ENCODE measurements at regions of chr7 and their contacts with region 1.

Region 1: DNA sequence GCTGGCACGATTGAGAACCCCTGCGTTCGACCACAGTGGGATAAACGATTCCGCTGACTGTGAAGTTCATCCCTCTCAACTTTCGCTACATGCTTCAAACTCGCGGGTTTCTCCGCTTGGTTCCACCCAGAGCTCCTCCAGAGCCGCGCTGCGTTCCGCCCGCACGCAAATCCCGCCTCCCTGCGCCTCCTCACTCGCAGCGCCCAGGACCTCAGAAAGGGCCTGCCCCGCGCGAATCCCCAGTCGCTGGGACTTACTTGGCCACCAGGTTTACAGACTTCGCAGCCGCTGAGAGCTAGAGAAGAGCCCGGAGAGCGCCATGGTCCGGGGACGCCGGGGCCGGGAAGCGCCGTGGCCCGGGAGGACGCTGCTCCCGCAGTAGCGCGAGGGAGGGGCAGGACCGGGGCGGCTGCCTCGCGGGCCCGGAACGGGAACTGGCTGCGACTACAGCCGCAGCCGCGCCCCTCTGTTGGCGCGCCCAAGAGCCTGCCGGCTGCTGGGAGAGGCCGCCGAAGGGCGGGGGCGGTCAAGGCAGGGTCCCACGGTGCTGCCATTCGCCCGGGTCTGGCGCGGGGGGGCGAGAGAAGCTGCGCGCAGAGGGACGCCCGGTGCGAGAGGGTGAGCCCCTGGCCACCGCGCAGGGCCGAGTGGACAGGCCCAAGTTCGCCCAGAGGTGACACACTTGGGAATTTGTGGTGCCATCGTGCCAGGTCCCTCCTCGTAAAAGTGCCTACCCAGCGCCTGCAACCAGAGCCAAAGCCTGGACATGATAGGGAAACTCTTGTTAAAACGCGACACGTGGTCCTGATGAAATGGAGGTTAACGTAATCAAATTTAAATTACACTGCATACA is at the start of gene NOD1:
- DNase-seq: peak; percentile 87 to 91 (median 89)
- ATAC-seq: peak; percentile 74 to 95 (median 94)
- H3K4me3 ChIP-seq: peak within 1 kb of the TSS; percentile 47 to 90 (median 68)
- H3K27ac ChIP-seq: peak within 1 kb of the TSS; percentile 91 to 99 (median 95)
- H3K4me1 ChIP-seq: peaks cover 3 to 54% (median 48%) of the 10 kb centered on the region in 12 donors
- H3K27me3 ChIP-seq: no peaks in the 10 kb centered on the region
- CTCF ChIP-seq: peak in 4 of 12 donors; percentile 24 to 47 (median 32)
- POLR2A ChIP-seq: peak in 1 of 2 donors; percentile 73
- total RNA-seq, gene NOD1: 5.3 to 28.8 (median 9.0) TPM

Region 2: DNA sequence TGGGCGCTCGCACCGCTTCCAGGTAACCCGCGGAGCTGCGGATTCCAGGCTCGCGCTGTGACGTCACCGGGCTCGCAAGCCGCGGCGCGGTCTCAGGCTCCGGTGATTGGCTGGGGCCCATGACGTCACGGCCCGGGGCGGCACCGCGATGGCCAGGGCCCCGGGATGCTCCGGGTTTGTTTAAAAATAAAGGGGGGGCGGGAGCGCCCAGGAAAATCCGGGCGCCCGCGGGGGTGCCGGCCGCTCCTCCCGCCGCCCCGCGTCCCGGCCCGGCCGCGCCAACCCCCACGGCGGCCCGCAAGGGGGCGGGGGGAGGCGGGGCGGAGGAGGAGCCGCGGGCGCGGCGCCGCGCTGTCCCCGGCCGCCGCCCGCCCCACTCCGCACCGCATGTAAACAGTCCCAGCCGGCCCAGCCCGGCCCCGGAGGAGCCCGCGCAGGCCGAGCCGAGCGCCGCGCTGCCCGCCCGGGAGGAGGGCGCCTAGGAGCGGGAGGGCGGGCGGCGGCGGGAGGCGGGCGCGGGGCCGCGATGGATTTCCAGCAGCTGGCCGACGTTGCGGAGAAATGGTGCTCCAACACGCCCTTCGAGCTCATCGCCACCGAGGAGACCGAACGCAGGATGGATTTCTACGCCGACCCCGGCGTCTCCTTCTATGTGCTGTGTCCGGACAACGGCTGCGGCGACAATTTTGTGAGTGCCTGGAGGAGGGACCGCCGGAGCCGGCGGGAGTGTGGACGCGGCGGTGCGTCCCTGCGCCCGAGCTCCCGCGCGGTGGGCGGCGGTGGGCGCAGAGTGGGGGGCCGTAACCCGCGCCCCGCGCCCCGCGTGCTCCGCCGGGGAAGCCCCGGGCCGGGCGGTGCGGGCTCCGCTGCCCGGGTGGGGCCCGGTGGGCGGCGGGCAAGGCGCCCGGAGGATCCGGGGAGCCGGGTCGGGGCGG is 343.7 kb before region 1 on chr7 and contains the start of gene MTURN:
- intact Hi-C with region 1: loop called in 1 of 10 experiments (anchors 5 kb)
- DNase-seq: peak; percentile 89 to 94 (median 91)
- ATAC-seq: peak; percentile 77 to 89 (median 86)
- H3K4me3 ChIP-seq: peak within 1 kb of the TSS; percentile 70 to 99 (median 96)
- H3K27ac ChIP-seq: peak within 1 kb of the TSS; percentile 79 to 96 (median 90)
- H3K4me1 ChIP-seq: peaks cover 0 to 40% (median 8%) of the 10 kb centered on the region in 12 donors
- H3K27me3 ChIP-seq: no peaks in the 10 kb centered on the region
- CTCF ChIP-seq: no peak
- POLR2A ChIP-seq: peak in 1 of 2 donors; percentile 48
- total RNA-seq, gene MTURN: 16.7 to 45.2 (median 21.6) TPM

Region 3: DNA sequence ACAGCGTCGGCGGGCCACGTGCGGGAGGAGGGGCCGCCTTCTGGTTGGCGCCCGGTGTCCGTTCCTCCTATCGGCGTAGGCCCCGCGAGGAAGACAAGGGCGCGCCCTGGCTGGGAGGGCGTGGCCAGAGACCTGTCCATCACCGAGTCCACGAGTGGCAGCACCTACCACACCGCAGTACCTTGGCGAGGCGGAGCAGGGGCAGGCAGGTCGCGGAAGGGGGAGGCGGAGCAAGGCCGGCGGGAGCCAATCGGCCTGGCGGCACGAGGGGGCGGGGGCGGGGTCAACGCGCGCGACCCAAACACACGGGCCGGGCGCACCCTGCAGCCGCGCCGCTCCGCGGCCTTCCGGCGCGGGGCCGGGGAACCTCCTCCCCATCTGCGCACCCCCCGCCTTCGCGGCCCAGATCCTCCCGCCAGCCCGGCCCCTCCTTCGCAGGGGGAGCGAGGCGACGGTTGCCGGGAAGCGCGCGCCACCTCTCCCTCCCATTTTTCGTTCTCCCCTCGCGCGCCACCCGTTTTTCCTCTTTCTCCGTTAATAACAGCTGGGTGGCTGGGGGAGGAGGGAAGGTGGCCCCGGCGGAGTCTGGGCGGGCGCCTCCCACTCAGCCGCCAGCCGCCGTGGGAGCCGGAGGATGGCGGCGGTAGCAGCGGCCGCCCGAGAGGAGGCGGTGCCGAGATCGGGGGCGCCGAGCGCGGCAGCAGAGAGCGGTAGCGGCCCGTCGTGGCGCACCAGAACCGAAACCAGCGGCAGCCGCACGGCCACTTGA is 194.1 kb before region 1 on chr7 and contains the start of gene ZNRF2:
- intact Hi-C with region 1: loop called in 2 of 10 experiments (anchors 5 to 10 kb)
- DNase-seq: peak; percentile 98 to 100 (median 99)
- ATAC-seq: peak; percentile 96 to 99 (median 98)
- H3K4me3 ChIP-seq: peak within 1 kb of the TSS; percentile 54 to 98 (median 85)
- H3K27ac ChIP-seq: peak within 1 kb of the TSS; percentile 95 to 99 (median 98)
- H3K4me1 ChIP-seq: peaks cover 0 to 44% (median 23%) of the 10 kb centered on the region in 12 donors
- H3K27me3 ChIP-seq: no peaks in the 10 kb centered on the region
- CTCF ChIP-seq: peak; percentile 19 to 80 (median 54)
- POLR2A ChIP-seq: peak in 1 of 2 donors; percentile 79
- total RNA-seq, gene ZNRF2: 7.3 to 15.2 (median 10.9) TPM

Region 4: DNA sequence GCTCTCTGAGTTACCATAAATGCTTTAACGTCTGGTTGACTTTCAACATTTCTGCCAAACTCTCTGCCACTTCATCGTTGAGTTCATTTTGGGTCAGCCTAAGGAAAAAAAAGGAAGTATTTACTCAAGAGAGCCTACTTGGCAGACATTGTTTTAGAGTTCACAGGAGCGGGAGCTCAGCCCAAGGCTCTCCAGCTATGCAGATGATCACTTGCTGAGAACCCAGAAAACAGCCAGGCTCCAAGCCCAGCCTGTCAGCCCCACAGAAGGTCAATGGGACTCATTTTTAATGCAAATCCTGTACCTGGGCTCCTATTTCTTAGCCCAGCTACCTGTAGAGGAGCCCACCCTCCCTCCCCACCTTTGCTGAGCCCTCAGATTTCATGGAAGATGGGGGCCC is 45.5 kb before region 1 on chr7:
- intact Hi-C with region 1: loop called in 1 of 10 experiments (anchors 5 kb)
- DNase-seq: peak; percentile 44 to 69 (median 48)
- ATAC-seq: peak; percentile 44 to 83 (median 76)
- H3K4me3 ChIP-seq: no peak overlapping the region
- H3K27ac ChIP-seq: peak overlapping the region in 10 of 12 donors; percentile 9 to 81 (median 38)
- H3K4me1 ChIP-seq: peaks cover 7 to 86% (median 38%) of the 10 kb centered on the region in 12 donors
- H3K27me3 ChIP-seq: no peaks in the 10 kb centered on the region
- CTCF ChIP-seq: no peak
- POLR2A ChIP-seq: no peak

Region 5: DNA sequence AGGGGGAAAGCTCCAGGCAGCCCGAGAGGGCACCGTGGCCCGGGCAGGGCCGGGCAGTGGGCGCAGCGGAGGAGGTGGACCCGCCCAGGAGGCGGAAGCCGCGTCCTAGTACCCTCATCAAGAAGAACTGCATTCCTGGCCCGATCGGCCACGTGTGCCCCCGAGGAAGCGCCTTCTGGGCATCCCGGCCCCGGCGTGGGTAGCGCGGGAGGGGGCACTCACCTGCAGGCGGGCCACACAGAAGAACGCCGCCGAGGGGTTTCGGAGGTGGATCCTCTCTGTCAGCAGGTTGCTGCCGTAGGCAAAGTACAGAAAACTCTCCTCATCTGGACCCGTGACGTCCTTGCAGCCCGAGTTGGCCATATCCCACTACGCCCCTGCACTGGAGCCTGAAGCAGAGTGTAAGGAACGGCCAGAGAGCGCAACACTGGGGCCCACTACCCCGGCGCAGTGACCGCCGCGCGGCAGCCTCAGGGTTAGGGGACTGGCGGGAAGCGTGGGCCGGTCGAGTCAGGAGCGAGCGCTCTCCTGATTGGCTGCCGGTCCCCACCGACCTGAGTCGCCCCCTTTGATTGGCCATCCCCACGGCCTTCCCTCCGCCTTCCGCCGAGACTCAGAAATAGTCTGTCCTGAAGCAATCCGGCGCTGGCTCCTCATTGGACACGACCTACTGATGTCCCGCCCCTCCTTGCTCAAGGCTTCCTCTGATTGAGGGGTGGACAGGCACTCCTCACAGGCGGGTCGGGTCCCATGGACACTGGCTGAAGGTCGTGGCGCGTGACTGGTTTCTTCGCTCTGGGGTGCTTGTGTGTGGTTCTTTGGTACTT is 26.0 kb after region 1 on chr7 and contains the start of gene GGCT:
- intact Hi-C with region 1: loop called in 4 of 10 experiments (anchors 2 kb)
- DNase-seq: peak; percentile 98 to 100 (median 99)
- ATAC-seq: peak; percentile 99 to 100 (median 100)
- H3K4me3 ChIP-seq: peak within 1 kb of the TSS; percentile 62 to 99 (median 80)
- H3K27ac ChIP-seq: peak within 1 kb of the TSS; percentile 69 to 94 (median 88)
- H3K4me1 ChIP-seq: peaks cover 0 to 31% (median 12%) of the 10 kb centered on the region in 12 donors
- H3K27me3 ChIP-seq: no peaks in the 10 kb centered on the region
- CTCF ChIP-seq: no peak
- POLR2A ChIP-seq: peak in 1 of 2 donors; percentile 79
- total RNA-seq, gene GGCT: 14.1 to 23.6 (median 17.8) TPM